RWPE1 (cell line): ENCODE measurements at regions of chr1 and their contacts with region 1.

Region 1: GRCh38 chr1:171245458-171246064 is 2.7 kb upstream of the FMO1 start:
- DNase-seq: peak; percentile 57
- H3K27ac ChIP-seq: no peak overlapping the region
- CTCF ChIP-seq: peak; percentile 77

Region 2: GRCh38 chr1:171261336-171261735 is 15.8 kb after region 1 on chr1:
- CTCF ChIA-PET with region 1: interaction called, 10 read pairs
- POLR2A ChIA-PET with region 1: no interaction called
- DNase-seq: no peak
- H3K27ac ChIP-seq: no peak overlapping the region
- CTCF ChIP-seq: no peak

Region 3: DNA sequence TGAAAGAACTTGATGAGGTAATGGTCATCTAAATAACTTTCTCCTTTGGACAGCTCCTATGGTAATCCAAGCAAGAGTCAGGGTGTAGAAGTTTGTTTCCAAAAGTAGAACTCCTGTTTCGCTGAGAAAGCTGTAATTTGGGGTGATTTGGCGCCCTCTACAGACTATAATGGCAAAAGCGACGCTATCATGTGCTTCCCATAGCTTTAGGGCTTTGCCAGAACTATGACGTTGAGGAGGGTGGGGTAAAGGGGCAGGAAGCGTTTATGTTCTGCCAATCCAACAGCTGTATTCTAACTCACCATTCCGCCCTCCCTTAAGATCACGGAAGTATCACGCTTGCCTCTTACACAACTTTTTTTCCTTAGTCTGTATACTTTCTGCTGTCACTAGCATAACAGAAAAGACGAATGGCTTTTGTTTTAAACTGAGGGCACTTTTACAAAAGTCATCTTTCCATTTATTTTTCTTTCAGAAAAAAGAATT is 68.3 kb after region 1 on chr1 and contains the start of gene FMO4:
- CTCF ChIA-PET with region 1: interaction called, 27 read pairs
- POLR2A ChIA-PET with region 1: no interaction called
- DNase-seq: peak; percentile 98
- H3K27ac ChIP-seq: no peak within 1 kb of the TSS
- CTCF ChIP-seq: peak; percentile 82